PC-3 (cell line): ENCODE measurements at regions of chr2 and their contacts with region 1.

Region 1: DNA sequence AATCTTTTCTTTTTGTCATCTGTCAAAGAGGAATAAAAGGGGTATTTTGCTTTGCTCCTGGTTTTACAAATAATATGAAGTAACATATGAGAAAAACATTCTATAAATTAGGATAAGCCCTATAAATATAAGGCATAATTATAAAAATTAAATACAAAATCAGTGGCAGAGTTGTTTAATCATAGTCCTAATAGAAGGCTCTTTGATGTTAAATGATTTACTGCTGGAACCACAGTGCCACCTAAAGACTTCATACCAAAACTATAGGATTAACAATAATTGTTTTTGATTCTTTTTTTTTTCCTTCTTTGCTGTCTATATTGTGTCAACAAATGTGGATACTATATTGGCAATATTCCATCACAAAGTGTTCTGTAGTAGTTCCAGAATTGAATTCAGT is 837.7 kb upstream of the SLC39A10 start:
- DNase-seq: peak; percentile 32
- ATAC-seq: peak; percentile 38; the same call in 1 of the 2 replicates
- H3K4me3 ChIP-seq: no peak overlapping the region
- H3K27ac ChIP-seq: no peak overlapping the region
- H3K4me1 ChIP-seq: no peaks in the 10 kb centered on the region; the same call in 1 of the 2 replicates
- H3K27me3 ChIP-seq: no peaks in the 10 kb centered on the region
- CTCF ChIP-seq: peak; percentile 56

Region 2: DNA sequence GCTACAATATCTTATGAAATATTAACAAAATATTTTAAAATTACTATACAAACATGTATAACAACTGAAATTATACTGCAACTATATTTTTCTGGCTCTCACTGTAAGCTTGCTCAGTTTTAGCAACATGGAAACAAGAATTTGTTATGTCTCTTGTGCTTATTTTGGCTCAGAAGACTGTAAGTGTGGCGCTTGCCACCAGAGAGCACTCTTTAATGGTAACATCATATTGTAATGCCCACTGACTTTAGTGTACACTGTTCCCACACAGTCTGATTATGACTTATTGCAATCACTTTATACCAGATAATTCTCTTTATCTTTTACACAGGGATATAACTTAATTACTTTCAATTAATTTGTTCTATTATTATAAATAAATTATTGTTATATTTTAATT is 1124.0 kb before region 1 on chr2:
- CTCF ChIA-PET with region 1: no interaction called
- POLR2A ChIA-PET with region 1: no interaction called
- intact Hi-C with region 1: loop called (anchors 5 kb)
- DNase-seq: peak; percentile 56
- ATAC-seq: peak; percentile 91
- H3K4me3 ChIP-seq: no peak overlapping the region
- H3K27ac ChIP-seq: no peak overlapping the region
- H3K4me1 ChIP-seq: no peaks in the 10 kb centered on the region
- H3K27me3 ChIP-seq: no peaks in the 10 kb centered on the region
- CTCF ChIP-seq: peak; percentile 61

Region 3: GRCh38 chr2:194166818-194167217 is 652.5 kb before region 1 on chr2:
- CTCF ChIA-PET with region 1: no interaction called
- POLR2A ChIA-PET with region 1: no interaction called
- intact Hi-C with region 1: loop called (anchors 2 kb)
- DNase-seq: peak; percentile 53
- ATAC-seq: peak; percentile 64
- H3K4me3 ChIP-seq: no peak overlapping the region
- H3K27ac ChIP-seq: no peak overlapping the region
- H3K4me1 ChIP-seq: no peaks in the 10 kb centered on the region
- H3K27me3 ChIP-seq: no peaks in the 10 kb centered on the region
- CTCF ChIP-seq: peak; percentile 59

Region 4: DNA sequence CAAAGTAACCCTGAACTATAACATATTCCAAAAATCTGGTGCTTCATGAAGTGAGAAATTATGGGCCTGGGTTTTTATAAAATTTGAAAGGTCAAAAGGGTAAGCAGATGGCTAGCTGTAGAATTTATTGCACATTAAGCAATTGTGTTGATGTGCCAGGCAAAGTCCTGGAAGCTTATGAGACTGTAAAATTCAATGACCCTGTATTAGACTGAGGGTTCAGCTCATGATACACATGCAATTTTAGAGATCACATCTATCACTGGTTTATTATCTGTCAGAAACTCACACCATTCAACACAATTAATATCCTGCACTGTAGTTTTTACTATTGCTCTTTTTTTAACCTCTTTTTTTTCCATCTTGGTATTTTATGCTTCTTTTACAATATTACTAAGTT is 324.9 kb before region 1 on chr2:
- CTCF ChIA-PET with region 1: no interaction called
- POLR2A ChIA-PET with region 1: no interaction called
- intact Hi-C with region 1: loop called (anchors 5 kb)
- DNase-seq: no peak
- ATAC-seq: no peak
- H3K4me3 ChIP-seq: no peak overlapping the region
- H3K27ac ChIP-seq: no peak overlapping the region
- H3K4me1 ChIP-seq: no peaks in the 10 kb centered on the region
- H3K27me3 ChIP-seq: no peaks in the 10 kb centered on the region
- CTCF ChIP-seq: no peak

Region 5: GRCh38 chr2:194545978-194546377 is 273.4 kb before region 1 on chr2:
- CTCF ChIA-PET with region 1: no interaction called
- POLR2A ChIA-PET with region 1: no interaction called
- intact Hi-C with region 1: loop called (anchors 1 kb)
- DNase-seq: peak; percentile 47
- ATAC-seq: peak; percentile 34; the same call in 1 of the 2 replicates
- H3K4me3 ChIP-seq: no peak overlapping the region
- H3K27ac ChIP-seq: no peak overlapping the region
- H3K4me1 ChIP-seq: peaks cover 4% of the 10 kb centered on the region; the same call in 1 of the 2 replicates
- H3K27me3 ChIP-seq: no peaks in the 10 kb centered on the region
- CTCF ChIP-seq: peak; percentile 59

Region 6: GRCh38 chr2:194616334-194616733 is 203.0 kb before region 1 on chr2:
- CTCF ChIA-PET with region 1: no interaction called
- POLR2A ChIA-PET with region 1: no interaction called
- intact Hi-C with region 1: loop called (anchors 5 kb)
- DNase-seq: no peak
- ATAC-seq: no peak
- H3K4me3 ChIP-seq: no peak overlapping the region
- H3K27ac ChIP-seq: no peak overlapping the region
- H3K4me1 ChIP-seq: no peaks in the 10 kb centered on the region
- H3K27me3 ChIP-seq: no peaks in the 10 kb centered on the region
- CTCF ChIP-seq: no peak

Region 7: GRCh38 chr2:194698012-194698411 is 121.3 kb before region 1 on chr2:
- CTCF ChIA-PET with region 1: interaction called, 5 read pairs
- POLR2A ChIA-PET with region 1: no interaction called
- intact Hi-C with region 1: loop called (anchors 5 kb)
- DNase-seq: peak; percentile 2
- ATAC-seq: peak; percentile 23
- H3K4me3 ChIP-seq: no peak overlapping the region
- H3K27ac ChIP-seq: peak overlapping the region; percentile 69
- H3K4me1 ChIP-seq: peaks cover 37% of the 10 kb centered on the region
- H3K27me3 ChIP-seq: no peaks in the 10 kb centered on the region
- CTCF ChIP-seq: no peak